Ascending aorta (tissue), 2 donors: ENCODE measurements at regions of chr7 and their contacts with region 1.

Region 1: GRCh38 chr7:23531794-23532489 is at the start of gene TRA2A:
- DNase-seq: peak; percentile 85 to 98
- H3K4me3 ChIP-seq: peak within 1 kb of the TSS; percentile 90 to 97
- H3K27ac ChIP-seq: peak within 1 kb of the TSS; percentile 95 to 99
- H3K4me1 ChIP-seq: peaks cover 3 to 29% of the 10 kb centered on the region in 2 donors
- H3K27me3 ChIP-seq: no peaks in the 10 kb centered on the region
- CTCF ChIP-seq: no peak
- total RNA-seq, gene TRA2A: 14.4 TPM

Region 2: GRCh38 chr7:23105644-23106056 is 426.3 kb before region 1 on chr7 and contains the start of gene KLHL7:
- intact Hi-C with region 1: loop called (anchors 10 kb)
- DNase-seq: peak; percentile 87 to 99
- H3K4me3 ChIP-seq: peak within 1 kb of the TSS; percentile 88 to 96
- H3K27ac ChIP-seq: peak within 1 kb of the TSS; percentile 89 to 92
- H3K4me1 ChIP-seq: peaks cover 4 to 26% of the 10 kb centered on the region in 2 donors
- H3K27me3 ChIP-seq: no peaks in the 10 kb centered on the region
- CTCF ChIP-seq: no peak
- total RNA-seq, gene KLHL7: 1.2 TPM

Region 3: GRCh38 chr7:23298885-23299769 is 232.8 kb before region 1 on chr7 and contains the start of gene MALSU1:
- intact Hi-C with region 1: loop called (anchors 5 kb)
- DNase-seq: peak; percentile 79 to 99
- H3K4me3 ChIP-seq: peak within 1 kb of the TSS; percentile 78 to 91
- H3K27ac ChIP-seq: peak within 1 kb of the TSS; percentile 75 to 79
- H3K4me1 ChIP-seq: peaks cover 8 to 17% of the 10 kb centered on the region in 2 donors
- H3K27me3 ChIP-seq: no peaks in the 10 kb centered on the region
- CTCF ChIP-seq: no peak
- total RNA-seq, gene MALSU1: 22.4 TPM

Region 4: GRCh38 chr7:23597094-23598091 is 65.5 kb after region 1 on chr7 and contains the start of gene CCDC126:
- intact Hi-C with region 1: loop called (anchors 1 kb)
- DNase-seq: peak; percentile 75 to 96
- H3K4me3 ChIP-seq: peak within 1 kb of the TSS; percentile 72 to 94
- H3K27ac ChIP-seq: peak within 1 kb of the TSS; percentile 94 to 100
- H3K4me1 ChIP-seq: peaks cover 0 to 8% of the 10 kb centered on the region in 2 donors
- H3K27me3 ChIP-seq: no peaks in the 10 kb centered on the region
- CTCF ChIP-seq: no peak
- total RNA-seq, gene CCDC126: 140 TPM

Region 5: DNA sequence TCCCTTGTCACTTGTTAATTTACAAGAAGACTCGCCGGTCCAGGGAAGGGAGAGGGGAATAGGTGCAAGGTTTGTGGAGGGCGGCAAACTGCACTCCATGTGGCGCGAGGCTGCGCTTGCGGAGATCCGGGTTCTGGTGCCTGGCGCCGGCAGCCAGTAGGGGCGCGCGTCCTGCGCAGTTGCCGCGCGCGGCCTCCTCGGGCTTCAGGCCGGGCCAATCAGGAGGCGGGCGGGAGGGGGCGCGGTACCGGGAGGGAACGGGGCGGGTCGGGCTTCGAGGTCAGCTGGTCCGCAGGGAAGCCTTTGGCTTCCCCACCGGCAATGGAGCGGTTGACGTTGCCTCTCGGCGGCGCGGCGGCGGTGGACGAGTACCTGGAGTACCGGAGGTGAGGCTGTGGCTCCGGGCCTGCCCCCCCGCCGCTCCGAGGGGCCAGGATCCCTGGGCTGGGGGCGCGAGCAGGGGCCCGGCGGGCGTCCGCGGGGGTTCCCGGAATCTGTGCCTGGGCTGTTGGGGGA is 148.0 kb after region 1 on chr7 and contains the start of gene FAM221A:
- intact Hi-C with region 1: loop called (anchors 2 kb)
- DNase-seq: peak; percentile 30 to 93
- H3K4me3 ChIP-seq: peak within 1 kb of the TSS; percentile 84 to 95
- H3K27ac ChIP-seq: peak within 1 kb of the TSS; percentile 85 to 87
- H3K4me1 ChIP-seq: peaks cover 0 to 5% of the 10 kb centered on the region in 2 donors
- H3K27me3 ChIP-seq: no peaks in the 10 kb centered on the region
- CTCF ChIP-seq: peak; percentile 34 to 88 (median 87)
- total RNA-seq, gene FAM221A: 10.1 TPM

Region 6: GRCh38 chr7:25179771-25180591 is 1648.0 kb after region 1 on chr7:
- intact Hi-C with region 1: loop called (anchors 10 kb)
- DNase-seq: peak; percentile 58 to 97
- H3K4me3 ChIP-seq: peak overlapping the region; percentile 69 to 74
- H3K27ac ChIP-seq: peak overlapping the region; percentile 78 to 85
- H3K4me1 ChIP-seq: peaks cover 0 to 4% of the 10 kb centered on the region in 2 donors
- H3K27me3 ChIP-seq: no peaks in the 10 kb centered on the region
- CTCF ChIP-seq: peak; percentile 54 to 95 (median 87)